ENCODE measurements at regions of chr5 and their contacts with region 1.

Region 1: GRCh38 chr5:67809589-67809988 is 406.0 kb upstream of the PIK3R1 start:
- DNase-seq: no peak
- ATAC-seq: no peak
- H3K4me3 ChIP-seq: no peak overlapping the region
- H3K27ac ChIP-seq: peak overlapping the region; percentile 89
- H3K4me1 ChIP-seq: peaks cover 11% of the 10 kb centered on the region
- H3K27me3 ChIP-seq: no peaks in the 10 kb centered on the region

Region 2: GRCh38 chr5:67246108-67246507 is 563.5 kb before region 1 on chr5:
- intact Hi-C with region 1: loop called in 1 of 4 experiments (anchors 10 kb)
- DNase-seq: peak in 1 of 3 donors; percentile 39
- ATAC-seq: peak; percentile 31 to 39
- H3K4me3 ChIP-seq: no peak overlapping the region
- H3K27ac ChIP-seq: no peak overlapping the region
- H3K4me1 ChIP-seq: peaks cover 9% of the 10 kb centered on the region
- H3K27me3 ChIP-seq: no peaks in the 10 kb centered on the region

Region 3: DNA sequence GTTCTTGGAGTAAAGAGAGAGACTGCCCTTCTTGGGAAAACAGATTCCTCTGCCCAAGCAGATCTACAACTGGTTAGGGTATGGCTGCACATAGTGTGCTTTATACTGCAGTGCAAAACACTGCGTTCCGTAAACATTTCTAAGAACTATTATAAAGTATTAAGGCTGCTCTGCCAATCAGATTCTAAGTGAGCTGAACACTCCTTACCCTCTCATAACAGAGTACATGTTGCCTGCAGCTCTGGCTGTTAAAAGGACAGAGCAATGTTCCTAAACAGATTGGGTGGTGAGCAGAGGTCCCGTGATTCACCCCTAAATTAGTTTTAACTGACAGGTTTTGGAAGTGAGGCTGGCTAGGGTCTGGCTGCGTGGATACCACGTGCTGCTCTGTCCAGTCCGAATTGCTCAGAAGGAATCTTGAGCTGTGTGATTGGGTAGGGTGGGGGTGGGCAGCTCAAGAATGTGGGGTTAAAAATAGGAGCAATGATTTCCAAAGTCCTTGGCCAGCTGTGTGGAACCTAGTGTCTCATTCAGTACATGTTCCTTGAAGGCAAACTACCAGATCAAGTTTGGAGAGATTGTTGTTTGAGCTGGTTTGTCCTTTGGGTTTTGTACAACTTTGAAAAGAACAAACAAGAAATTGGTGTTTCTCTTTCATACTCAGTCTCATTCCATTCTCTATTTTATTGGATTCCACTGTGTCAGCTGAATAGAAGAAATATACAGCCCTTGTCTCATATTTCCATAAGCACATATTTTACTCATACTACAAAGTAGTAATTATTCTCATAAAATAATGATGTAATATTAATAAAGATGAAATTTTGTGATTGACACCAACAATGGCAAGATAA is 115.4 kb before region 1 on chr5:
- intact Hi-C with region 1: loop called in 1 of 4 experiments (anchors 10 kb)
- DNase-seq: peak; percentile 68 to 88 (median 77)
- ATAC-seq: peak; percentile 98
- H3K4me3 ChIP-seq: no peak overlapping the region
- H3K27ac ChIP-seq: peak overlapping the region; percentile 70
- H3K4me1 ChIP-seq: peaks cover 2% of the 10 kb centered on the region
- H3K27me3 ChIP-seq: no peaks in the 10 kb centered on the region

Region 4: GRCh38 chr5:68027519-68027918 is 217.9 kb after region 1 on chr5:
- intact Hi-C with region 1: no loop called
- DNase-seq: peak in 1 of 3 donors; percentile 67
- ATAC-seq: peak; percentile 29 to 62
- H3K4me3 ChIP-seq: no peak overlapping the region
- H3K27ac ChIP-seq: no peak overlapping the region
- H3K4me1 ChIP-seq: no peaks in the 10 kb centered on the region
- H3K27me3 ChIP-seq: no peaks in the 10 kb centered on the region

Region 5: DNA sequence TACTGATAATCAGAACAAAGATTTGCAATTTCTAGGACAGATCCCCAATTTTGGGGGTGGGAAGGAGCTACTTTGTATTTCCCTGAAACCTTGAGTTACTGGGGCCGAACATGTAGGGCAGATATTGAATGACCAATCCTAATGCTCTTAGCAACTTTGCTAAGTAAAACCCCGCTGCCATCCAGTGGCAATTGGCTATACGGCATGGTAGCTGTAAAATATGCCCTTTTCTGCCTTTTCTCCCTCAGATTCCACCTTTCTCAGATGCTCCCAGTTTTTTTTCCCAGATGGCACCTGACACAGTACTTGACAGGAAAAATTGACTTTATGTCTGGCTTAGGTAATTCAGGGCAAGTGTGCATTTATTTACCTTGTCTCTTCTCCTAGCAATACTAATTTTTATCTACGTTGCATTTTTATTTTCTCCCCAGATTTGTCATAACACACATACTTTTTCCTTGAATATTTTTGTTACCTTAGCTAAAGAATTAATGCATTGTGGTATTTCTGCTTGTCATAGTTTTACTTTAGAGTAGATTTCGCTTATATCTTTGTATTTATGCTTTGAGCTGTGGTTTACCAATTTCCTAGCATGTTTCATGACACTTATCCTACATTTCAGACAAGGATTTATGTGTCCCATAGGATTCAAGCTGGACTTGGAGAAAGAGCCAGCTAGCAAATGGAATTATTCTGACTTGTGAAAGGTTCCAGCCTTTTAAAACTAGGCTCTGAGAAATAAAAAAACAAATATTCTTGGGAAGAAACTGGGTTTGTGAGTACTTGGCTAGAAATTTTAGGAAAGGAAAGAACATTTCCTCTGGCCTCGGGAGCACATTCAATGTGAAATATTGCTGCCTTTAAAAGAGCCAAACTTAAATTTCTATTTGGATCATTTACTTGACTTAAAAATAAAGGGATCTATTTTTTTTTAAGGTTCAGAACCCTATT is 443.4 kb after region 1 on chr5:
- intact Hi-C with region 1: loop called in 1 of 4 experiments (anchors 10 kb)
- DNase-seq: peak; percentile 48 to 71 (median 69)
- ATAC-seq: peak; percentile 72 to 85
- H3K4me3 ChIP-seq: peak overlapping the region; percentile 30
- H3K27ac ChIP-seq: peak overlapping the region; percentile 2
- H3K4me1 ChIP-seq: peaks cover 28% of the 10 kb centered on the region
- H3K27me3 ChIP-seq: no peaks in the 10 kb centered on the region

Measured in right cardiac atrium (tissue), 5 donors.